CD8-positive, alpha-beta T cell (primary cell): ENCODE measurements at regions of chr19 and their contacts with region 1.

Region 1: DNA sequence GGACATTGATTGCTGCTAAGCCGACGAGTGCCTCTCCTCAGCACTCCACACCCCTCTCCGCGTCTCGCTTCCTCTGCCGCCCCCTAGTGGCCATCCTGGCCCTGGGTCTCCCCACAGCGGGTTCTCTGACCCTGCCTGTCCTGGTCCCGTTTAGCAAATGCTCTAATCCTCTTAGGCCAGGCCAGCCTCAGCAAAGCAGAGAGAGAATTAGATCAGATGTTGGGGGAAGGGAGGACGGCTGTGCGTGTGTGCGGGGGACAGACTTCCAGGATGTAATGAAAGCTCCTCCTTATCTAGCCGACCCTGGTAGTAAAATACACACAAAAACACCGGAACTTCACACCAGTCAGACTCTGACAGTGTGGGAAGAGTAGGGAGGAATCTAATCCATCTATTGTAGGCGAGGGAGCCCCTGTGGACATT is 4.5 kb downstream of the TPRX2 start:
- DNase-seq: peak; percentile 63 to 90 (median 81)
- ATAC-seq: peak; percentile 85
- H3K4me3 ChIP-seq: no peak overlapping the region
- H3K4me3 Mint-ChIP-seq: no peak overlapping the region
- H3K27ac ChIP-seq: no peak overlapping the region
- H3K27ac Mint-ChIP-seq: no peak overlapping the region
- H3K4me1 ChIP-seq: no peaks in the 10 kb centered on the region
- H3K4me1 Mint-ChIP-seq: no peaks in the 10 kb centered on the region
- H3K27me3 ChIP-seq: no peaks in the 10 kb centered on the region
- H3K27me3 Mint-ChIP-seq: peaks cover 19% of the 10 kb centered on the region
- CTCF ChIP-seq: peak; percentile 89

Region 2: DNA sequence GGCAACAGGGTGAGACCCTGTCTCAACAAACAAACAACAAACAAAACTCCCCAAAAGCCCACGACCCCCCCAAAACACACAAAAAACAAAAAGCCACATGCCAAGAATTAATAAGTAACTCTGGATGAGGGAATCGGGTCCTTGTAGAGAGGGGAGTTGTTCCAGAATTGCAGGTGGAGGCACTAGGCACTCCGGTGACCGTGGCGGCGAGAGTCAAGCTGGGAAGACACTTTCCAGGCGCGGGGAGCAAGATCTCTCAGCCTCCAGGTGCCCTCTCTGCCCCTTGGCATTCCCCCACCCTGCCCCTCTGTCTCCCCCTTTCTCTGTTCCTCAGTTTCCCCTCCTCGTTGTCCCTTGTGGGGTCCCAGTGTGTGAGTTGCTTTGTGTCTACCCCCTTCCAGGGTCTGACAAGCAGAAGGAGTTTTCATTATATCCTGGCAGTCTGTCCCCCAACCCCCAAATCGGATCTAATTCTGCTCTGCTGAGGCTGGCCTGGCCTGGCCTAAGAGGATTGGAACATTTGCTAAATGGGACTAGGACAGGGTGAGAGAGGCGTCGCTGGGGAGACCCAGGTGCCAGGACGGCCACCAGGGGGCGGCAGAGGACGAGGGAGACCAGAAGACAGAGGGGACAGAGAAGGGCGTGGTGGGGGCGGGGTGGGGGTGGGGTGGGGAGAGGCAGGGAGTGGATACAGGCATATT is 50.1 kb before region 1 on chr19:
- CTCF ChIA-PET with region 1: interaction called, 6 read pairs
- POLR2A ChIA-PET with region 1: no interaction called
- intact Hi-C with region 1: loop called in 1 of 2 experiments (anchors 1 kb)
- DNase-seq: peak; percentile 50 to 84 (median 73)
- ATAC-seq: peak; percentile 70
- H3K4me3 ChIP-seq: no peak overlapping the region
- H3K4me3 Mint-ChIP-seq: no peak overlapping the region
- H3K27ac ChIP-seq: no peak overlapping the region
- H3K27ac Mint-ChIP-seq: no peak overlapping the region
- H3K4me1 ChIP-seq: no peaks in the 10 kb centered on the region
- H3K4me1 Mint-ChIP-seq: no peaks in the 10 kb centered on the region
- H3K27me3 ChIP-seq: no peaks in the 10 kb centered on the region
- H3K27me3 Mint-ChIP-seq: peaks cover 9% of the 10 kb centered on the region
- CTCF ChIP-seq: peak; percentile 62

Region 3: DNA sequence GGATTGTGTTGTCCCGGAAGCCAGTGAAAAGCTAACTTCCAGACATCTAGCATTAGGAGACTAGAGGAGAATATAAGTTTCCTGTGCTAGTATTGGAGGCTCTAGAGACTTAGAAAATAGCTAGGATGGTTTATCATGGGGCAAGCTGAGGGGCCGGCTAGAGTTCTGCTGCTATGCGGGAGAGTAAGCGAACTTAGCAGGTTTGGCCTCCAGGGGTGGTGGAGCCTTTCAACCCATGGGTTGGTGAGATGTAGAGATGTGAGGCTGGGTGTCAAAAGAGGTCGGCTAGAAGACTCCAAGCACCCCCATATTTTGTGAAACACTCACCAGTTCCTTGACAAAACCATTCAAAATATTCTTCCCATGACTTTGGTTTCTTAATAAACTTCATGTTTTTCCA is 18.2 kb after region 1 on chr19:
- CTCF ChIA-PET with region 1: interaction called, 13 read pairs
- POLR2A ChIA-PET with region 1: no interaction called
- intact Hi-C with region 1: no loop called
- DNase-seq: no peak
- ATAC-seq: no peak
- H3K4me3 ChIP-seq: no peak overlapping the region
- H3K4me3 Mint-ChIP-seq: no peak overlapping the region
- H3K27ac ChIP-seq: no peak overlapping the region
- H3K27ac Mint-ChIP-seq: no peak overlapping the region
- H3K4me1 ChIP-seq: no peaks in the 10 kb centered on the region
- H3K4me1 Mint-ChIP-seq: no peaks in the 10 kb centered on the region
- H3K27me3 ChIP-seq: no peaks in the 10 kb centered on the region
- H3K27me3 Mint-ChIP-seq: peaks cover 24% of the 10 kb centered on the region
- CTCF ChIP-seq: no peak

Region 4: GRCh38 chr19:48190288-48190884 is 326.9 kb after region 1 on chr19:
- CTCF ChIA-PET with region 1: no interaction called
- POLR2A ChIA-PET with region 1: no interaction called
- intact Hi-C with region 1: no loop called
- DNase-seq: peak in 7 of 9 experiments; percentile 16 to 84 (median 68)
- ATAC-seq: peak; percentile 94
- H3K4me3 ChIP-seq: no peak overlapping the region
- H3K4me3 Mint-ChIP-seq: no peak overlapping the region
- H3K27ac ChIP-seq: no peak overlapping the region
- H3K27ac Mint-ChIP-seq: peak overlapping the region; percentile 64
- H3K4me1 ChIP-seq: no peaks in the 10 kb centered on the region
- H3K4me1 Mint-ChIP-seq: peaks cover 12% of the 10 kb centered on the region
- H3K27me3 ChIP-seq: no peaks in the 10 kb centered on the region
- H3K27me3 Mint-ChIP-seq: no peaks in the 10 kb centered on the region
- CTCF ChIP-seq: no peak